Gastrocnemius medialis (tissue), 4 donors: ENCODE measurements at regions of chrX and their contacts with region 1.

Region 1: GRCh38 chrX:136209016-136209738 is 42.0 kb downstream of the MAP7D3 start:
- DNase-seq: peak in 1 of 2 donors; percentile 62
- ATAC-seq: peak in 1 of 2 donors; percentile 17
- H3K4me3 ChIP-seq: no peak overlapping the region
- H3K27ac ChIP-seq: peak overlapping the region; percentile 68 to 92 (median 78)
- H3K4me1 ChIP-seq: peaks cover 2 to 24% of the 10 kb centered on the region in 2 donors
- H3K27me3 ChIP-seq: no peaks in the 10 kb centered on the region
- CTCF ChIP-seq: peak; percentile 45 to 66 (median 58)
- POLR2A ChIP-seq: no peak

Region 2: DNA sequence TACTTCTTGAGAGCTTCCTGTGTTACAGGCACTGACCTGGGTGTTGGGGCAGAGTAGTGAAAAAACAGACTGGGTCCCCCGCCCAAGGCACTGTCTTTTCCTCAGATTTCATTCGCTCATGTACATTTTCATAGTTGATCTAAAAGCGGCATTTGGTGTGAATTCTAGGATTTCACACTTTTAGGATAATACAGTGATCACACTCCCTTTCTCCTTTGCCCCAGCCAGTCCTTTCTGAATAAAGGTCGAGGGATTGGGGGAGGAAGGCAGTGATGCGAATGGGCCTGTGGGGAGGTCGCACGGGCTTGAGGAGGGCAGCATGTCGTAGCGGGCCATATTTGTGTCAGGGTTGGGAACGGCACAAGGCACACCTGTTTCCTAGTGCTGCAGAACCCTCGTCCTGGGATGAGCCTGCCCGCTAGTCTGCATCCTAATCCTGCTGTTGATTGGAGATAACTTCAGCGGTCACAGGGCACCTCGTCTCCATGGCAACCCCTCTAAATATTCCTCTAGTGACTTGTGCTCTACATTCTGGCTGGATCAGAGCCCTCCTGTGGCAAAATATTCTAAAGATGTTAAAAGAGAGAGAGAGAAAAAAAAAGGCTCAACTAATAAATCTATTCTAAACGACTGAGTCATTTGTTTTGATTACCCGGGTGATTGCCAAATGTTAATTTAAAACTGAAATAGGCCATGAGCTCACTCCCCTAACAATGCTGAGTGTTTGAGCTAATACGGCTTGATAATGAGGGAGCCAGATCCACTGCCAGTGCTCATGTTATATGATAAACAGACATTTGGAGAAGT is 40.0 kb before region 1 on chrX:
- in situ Hi-C with region 1: loop called in 2 of 4 experiments (anchors 5 to 10 kb)
- intact Hi-C with region 1: loop called (anchors 1 kb)
- DNase-seq: peak in 1 of 2 donors; percentile 35
- ATAC-seq: peak; percentile 16 to 78
- H3K4me3 ChIP-seq: peak overlapping the region in 1 of 4 donors; percentile 18
- H3K27ac ChIP-seq: peak overlapping the region; percentile 78 to 92 (median 84)
- H3K4me1 ChIP-seq: peaks cover 7 to 29% of the 10 kb centered on the region in 2 donors
- H3K27me3 ChIP-seq: no peaks in the 10 kb centered on the region
- CTCF ChIP-seq: no peak
- POLR2A ChIP-seq: no peak

Region 3: DNA sequence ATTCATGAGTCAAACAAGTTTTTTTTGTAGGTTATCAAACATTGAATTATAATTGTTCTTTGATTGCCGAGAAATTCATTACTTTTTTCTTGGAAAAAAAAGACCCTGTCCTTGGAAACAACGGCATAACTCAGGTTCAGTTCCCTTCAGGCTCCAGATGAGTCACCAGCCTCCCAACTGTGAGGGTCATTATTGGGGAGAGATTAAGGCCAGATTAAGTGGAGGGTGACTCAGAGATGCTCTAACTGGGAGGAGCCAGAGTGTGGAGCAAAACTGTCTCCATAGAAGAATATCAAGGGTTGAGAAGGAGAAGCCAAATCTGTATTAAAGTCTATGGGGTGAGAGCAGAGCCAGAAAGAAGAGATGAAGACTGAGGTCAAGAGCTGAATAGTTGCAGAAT is 101.2 kb after region 1 on chrX:
- in situ Hi-C with region 1: no loop called
- intact Hi-C with region 1: no loop called
- DNase-seq: no peak
- ATAC-seq: no peak
- H3K4me3 ChIP-seq: no peak overlapping the region
- H3K27ac ChIP-seq: no peak overlapping the region
- H3K4me1 ChIP-seq: no peaks in the 10 kb centered on the region
- H3K27me3 ChIP-seq: no peaks in the 10 kb centered on the region
- CTCF ChIP-seq: no peak
- POLR2A ChIP-seq: no peak

Region 4: DNA sequence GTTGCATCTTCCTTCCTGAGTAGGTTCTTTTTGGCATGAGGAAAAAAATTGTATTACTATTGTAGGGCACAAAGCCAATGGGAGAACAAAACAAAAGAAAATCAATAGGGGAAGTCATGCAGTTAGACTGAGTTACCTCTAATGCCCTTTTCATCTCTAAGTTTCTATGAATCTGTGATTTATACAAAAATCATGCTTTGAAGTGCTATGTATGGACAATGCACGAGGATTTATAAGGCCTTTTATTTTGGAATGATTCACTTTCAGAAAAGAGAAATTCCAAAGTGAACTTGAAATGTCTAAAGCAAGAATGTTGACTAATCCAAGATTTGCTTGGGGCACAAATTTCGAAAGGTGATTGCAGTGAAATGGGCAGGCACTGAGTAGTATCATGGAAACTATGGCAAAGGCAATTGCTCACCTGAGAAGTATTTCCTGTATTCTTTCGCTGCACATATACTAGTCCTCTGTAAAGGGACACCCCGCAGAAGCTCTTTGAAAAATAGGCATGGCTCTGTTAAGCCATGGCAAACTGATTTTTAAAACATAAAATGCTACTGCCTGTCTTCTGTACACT is 144.4 kb after region 1 on chrX:
- in situ Hi-C with region 1: no loop called
- intact Hi-C with region 1: no loop called
- DNase-seq: no peak
- ATAC-seq: no peak
- H3K4me3 ChIP-seq: no peak overlapping the region
- H3K27ac ChIP-seq: no peak overlapping the region
- H3K4me1 ChIP-seq: no peaks in the 10 kb centered on the region
- H3K27me3 ChIP-seq: no peaks in the 10 kb centered on the region
- CTCF ChIP-seq: no peak
- POLR2A ChIP-seq: no peak